HEK293T (cell line): ENCODE measurements at regions of chr16 and their contacts with region 1.

Region 1: GRCh38 chr16:66552286-66553177 is at the start of gene CKLF:
- DNase-seq: peak; percentile 95

Region 2: DNA sequence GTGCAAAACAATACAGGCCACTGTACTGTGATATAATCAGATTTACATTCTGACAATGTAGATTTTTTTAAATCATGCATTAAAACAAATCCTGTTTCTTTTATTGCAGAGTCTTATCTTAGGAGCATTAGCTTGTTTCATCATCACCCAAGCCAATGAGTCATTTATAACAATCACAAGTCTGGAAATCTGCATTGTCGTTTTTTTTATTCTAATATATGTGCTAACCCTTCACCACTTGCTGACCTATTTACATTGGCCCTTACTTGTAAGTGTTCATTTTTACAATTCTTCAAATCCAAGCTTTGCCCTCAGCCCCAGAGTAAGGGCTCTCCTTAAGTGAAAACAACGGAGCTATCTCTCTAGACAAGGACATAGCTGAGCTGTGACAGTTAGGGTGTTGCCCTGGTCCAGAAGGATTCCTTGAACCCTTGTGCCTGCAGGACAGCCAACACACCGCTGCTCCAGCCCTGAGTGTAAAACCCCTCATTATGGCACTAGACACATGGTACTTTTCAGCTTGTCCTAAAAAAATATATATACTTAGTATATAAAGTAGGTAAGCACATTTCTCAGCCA is 17.4 kb after region 1 on chr16:
- CTCF ChIA-PET with region 1: no interaction called
- POLR2A ChIA-PET with region 1: interaction called, 26 read pairs
- DNase-seq: no peak

Region 3: GRCh38 chr16:66596986-66597848 is 44.7 kb after region 1 on chr16:
- CTCF ChIA-PET with region 1: no interaction called
- POLR2A ChIA-PET with region 1: no interaction called
- DNase-seq: no peak